Right ventricle myocardium inferior (tissue), 1 donor: ENCODE measurements at regions of chr6 and their contacts with region 1.

Region 1: DNA sequence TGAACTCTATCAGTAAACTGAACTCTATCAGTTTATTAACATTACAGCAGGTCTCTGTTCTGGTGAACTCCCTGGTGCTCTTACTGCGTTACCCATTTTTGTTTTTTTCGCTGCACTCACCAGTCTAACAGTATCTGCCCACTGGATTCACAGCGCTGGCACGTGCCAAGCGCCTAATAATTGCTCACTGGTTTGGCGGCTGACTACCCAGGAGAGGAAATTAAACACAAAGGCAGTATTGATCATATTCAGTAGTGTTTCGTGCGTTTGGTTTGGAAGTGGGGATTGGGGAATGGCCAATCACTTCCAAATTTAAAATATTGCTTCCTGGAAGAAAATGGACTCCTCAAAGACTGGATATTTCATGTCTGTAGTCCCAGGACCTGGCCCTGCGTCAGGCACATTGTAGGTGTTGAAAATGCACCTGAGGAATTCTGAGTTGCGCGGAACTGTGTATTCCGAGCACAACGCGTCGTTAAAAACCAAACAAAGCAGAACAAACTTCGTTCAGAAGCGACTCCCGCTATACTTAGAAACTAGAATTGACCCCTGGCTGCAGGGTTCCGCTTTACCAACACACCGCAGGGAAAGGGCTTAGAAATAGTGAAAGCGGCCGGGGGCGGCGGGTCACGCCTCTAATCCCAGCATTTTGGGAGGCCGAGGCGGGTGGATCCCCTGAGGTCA is 1.1 kb upstream of the RPS12 start:
- DNase-seq: peak; percentile 72
- ATAC-seq: peak; percentile 14

Region 2: DNA sequence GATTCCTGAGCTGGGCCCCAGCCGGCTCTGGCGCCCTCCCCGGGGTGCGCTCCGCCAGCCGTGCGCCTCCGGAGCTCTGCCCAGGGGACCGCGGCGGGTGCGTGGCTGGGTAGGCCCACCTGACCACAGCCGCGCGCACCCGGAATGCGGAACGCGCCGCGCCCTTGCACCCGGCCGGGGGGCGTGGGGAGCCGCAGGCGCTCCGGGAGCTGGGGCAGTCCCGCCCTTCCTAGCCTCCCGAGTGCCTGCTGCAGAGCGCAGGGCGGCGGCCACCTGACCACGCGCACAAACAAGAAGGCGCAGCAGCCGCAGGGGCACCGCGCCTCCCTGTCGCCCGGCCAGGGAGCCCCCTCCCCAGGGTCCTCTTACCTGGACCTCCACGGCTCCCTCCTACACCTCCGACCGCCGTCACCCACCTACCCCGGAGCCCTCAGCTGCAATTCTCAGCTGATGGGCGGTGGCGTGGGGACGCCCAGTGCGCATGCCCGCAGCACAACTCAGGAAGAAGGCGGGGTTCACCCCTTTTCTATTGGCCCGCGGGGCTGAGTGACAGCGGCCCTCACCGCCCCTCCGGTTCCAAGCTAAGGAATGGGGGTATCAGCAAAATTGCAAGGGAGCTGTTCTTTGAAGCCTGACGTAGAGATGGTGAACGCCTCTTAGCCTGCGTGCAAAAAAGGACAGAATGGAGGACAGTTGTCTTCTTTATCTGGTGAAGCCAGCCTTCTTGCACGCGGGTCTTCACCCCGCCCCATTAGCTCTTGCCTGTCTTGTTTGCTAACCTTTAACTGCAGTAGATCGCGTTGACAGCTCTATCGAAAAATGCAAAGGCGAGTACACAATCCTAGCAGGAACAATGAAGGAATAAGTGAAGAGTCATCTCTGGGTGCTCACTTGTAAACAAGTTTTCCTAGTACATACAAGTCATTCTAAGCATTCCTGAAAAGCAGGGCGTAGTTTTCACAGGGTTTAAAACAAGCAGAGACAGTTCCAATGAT is 300.4 kb before region 1 on chr6 and contains the start of gene STX7:
- intact Hi-C with region 1: loop called (anchors 5 kb)
- DNase-seq: peak; percentile 95
- ATAC-seq: peak; percentile 99
- total RNA-seq, gene STX7: 53.3 TPM

Region 3: DNA sequence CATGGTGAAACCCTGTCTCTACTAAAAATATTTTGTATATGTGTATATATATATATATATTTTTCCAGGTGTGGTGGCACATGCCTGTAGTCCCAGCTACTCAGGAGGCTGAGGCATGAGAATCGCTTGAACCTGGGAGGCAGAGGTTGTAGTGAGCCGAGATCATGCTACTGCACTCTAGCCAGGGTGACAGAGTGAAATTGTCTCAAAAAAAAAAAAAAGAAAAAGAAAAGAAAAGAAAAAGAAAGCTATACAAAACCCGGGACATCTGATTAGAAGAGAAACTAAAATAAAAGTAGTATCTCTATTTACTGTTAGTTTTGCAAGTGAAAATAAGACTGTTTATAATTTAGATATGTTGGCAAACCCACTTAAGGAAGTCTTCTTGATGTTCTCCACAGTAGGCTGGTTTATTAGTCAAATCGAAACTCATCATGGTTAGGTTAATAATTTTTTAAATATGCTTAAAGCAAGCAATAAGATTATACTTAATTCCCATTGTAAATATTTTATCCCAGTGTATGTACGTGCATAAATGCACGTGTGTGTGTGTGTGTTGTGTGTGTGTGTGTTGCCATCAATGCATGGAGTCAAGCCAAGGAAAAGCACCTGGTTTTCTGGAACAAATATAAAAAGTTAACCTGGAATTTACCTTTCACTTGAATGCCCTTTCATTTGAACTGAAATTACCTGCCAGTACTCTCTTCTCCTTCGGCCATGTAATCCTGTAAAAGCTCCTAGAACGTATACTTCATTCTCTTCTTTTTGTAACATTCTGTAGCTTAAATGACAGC is 62.7 kb before region 1 on chr6:
- intact Hi-C with region 1: no loop called
- DNase-seq: no peak
- ATAC-seq: no peak

Region 4: DNA sequence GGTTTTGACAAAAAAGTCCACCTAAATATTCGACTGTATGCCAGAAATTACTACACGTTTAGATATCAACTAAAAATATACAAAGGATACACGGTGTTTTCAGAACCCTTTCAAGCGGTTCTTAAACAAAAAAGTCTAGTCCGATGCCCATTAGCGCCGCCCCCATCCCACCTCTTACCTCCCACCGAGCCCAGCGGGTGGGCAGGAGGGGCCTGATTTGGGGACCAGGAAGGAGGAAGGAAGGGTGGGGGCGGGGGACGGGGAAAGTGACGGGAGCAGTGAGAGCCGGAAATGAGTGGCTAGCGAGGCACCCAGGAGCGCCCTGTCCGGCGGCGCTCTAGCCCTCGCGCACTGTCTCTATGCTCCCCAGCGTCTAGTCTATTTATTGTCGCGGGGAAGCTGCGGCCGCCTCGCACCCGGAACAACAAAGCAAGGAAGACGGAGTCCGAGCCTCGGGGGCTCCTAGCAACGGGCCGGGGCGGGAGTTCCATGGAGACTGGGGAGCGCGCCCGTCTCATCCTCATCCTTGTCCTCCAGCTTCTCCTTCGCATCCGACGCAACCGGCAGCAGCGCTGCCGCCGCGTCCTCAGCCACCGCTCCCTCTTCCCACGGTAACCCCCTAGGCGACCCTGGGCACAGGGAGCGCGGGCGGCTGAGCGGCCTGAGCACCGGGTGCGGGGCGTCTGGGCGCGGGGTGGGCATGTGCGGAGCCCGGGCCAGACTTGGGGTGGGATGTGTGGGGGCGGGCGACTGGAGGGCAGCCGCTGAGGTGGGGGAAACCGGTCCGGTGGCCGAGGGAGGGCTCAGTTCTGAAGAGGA is 1139.7 kb after region 1 on chr6 and contains the start of gene TBPL1:
- intact Hi-C with region 1: loop called (anchors 5 kb)
- DNase-seq: peak; percentile 96
- ATAC-seq: peak; percentile 98
- total RNA-seq, gene TBPL1: 14.5 TPM